ENCODE measurements at regions of chr17 and their contacts with region 1.

Region 1: GRCh38 chr17:7045909-7046724 is 2.2 kb upstream of the SLC16A11 start:
- DNase-seq: peak; percentile 60
- CTCF ChIP-seq: peak; percentile 69

Region 2: GRCh38 chr17:6927290-6928126 is 118.6 kb before region 1 on chr17:
- in situ Hi-C with region 1: no loop called
- DNase-seq: no peak
- CTCF ChIP-seq: no peak

Region 3: DNA sequence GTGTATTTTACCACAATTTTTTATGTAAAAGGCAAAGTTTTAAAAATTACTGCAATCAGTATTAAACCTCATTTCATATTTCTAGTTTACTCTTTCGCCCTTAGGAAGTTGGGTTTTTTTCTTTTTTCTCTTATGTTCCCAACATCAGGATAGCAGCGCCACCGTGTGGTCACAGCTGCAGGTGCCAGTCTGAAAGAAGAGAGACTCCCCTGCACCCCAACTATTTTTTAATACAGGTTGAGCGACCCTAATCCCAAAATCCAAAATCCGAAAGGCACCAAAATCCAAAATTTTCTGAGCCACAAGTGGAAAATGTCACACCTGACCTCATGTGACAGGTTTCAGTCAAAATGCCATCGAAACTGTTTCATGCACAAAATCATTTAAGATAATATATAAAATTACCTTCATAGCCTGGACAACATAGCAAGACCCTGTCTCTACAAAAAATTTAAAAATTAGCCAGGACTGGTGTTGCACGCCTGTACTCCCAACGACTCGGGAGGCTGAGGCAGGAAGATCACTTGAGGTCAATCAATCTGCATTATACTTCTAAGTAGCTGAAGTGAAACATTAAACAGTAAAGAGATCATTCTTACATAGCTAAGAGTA is 90.3 kb after region 1 on chr17:
- in situ Hi-C with region 1: loop called (anchors 5 kb)
- DNase-seq: peak; percentile 74
- CTCF ChIP-seq: peak; percentile 93

Region 4: DNA sequence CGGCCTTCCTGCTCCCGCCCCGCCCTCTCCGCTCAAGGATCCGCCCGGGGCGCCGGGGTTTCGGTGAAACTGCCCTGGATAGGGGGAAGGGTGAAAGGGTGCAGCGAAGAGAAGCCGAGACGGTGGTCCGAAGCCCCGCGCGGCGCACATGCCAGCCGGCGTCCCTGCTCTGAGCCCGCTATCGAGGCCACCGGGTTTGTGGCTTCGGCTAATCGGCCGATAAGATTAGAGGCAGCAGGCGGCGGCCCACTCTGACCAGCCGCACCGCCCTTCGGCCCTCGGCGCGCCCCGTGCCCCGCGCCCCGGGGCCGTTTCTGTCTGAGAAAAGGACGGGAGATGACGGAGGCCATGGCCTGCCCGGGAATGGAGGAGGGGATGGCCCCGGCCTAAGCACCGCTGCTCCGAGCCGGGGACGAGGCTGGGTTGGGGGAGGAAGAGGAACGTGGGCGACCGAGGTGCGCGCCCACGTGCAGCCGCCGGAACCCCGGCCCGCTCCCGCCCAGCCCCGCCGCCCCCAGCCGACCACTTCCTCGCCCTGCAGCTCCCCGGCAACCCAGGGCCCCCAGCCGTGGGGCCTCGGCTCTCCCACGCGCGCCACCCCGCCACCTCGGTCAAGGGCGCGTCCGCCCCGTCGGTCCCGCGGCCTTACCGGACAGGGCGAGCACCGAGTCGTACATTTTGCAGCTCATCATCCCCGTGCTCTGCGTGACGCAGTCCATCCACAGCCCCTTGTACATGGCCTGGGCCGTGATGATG is 215.2 kb after region 1 on chr17:
- in situ Hi-C with region 1: no loop called
- DNase-seq: peak; percentile 70
- CTCF ChIP-seq: no peak

Region 5: DNA sequence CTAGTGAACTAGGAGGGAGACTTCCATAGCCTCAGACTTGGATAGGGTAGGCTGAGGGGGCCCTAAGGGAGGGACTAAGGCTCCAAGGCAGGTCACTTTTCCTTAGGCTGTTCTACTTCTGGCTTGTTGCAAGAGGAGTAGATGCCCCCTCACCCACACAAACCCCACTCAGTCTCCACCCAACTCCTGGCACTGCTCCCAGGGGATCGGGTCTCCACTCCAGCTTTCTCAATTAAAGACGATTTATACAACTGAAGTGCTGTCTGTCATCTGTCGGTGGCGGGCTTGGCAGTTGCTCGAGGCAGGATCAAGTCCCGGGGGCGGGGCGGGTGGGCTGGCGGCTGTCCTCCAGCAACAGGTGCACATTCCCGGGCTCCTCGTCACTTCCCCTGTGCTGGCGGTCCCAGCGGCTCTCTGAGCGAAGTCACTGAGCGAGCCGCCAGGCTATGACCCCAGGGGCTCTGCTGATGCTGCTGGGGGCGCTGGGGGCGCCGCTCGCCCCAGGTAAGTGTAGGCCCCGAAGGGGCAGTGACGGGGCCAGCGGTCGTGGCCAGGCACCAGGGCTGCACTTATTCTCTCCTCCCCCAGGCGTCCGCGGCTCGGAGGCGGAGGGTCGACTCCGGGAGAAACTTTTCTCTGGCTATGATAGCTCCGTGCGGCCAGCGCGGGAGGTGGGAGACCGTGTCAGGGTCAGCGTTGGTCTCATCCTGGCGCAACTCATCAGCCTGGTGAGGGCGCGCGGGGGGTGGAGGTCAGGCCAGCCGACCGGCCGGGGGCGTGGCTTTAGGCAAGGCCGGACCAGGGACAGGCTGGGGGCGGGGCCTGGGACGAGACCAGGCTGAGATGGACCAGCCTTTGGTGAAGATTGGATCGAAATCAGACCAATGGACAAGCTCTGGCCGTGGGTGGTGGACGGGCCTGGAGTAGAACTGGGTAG is 398.8 kb after region 1 on chr17 and contains the start of gene CHRNB1:
- in situ Hi-C with region 1: no loop called
- DNase-seq: peak; percentile 67
- CTCF ChIP-seq: no peak

Measured in GM13977 (cell line).